A549 (cell line): ENCODE measurements at regions of chr11 and their contacts with region 1.

Region 1: GRCh38 chr11:61733120-61733978 is 19.1 kb upstream of the MYRF start:
- DNase-seq: peak; percentile 81 to 95
- ATAC-seq: peak; percentile 69 to 89
- H3K4me3 ChIP-seq: no peak overlapping the region
- H3K27ac ChIP-seq: 0 out of 6 replicates have a peak overlapping the region, but pooled peaks of 1 of the 2 experiments have one; percentile 41
- H3K4me1 ChIP-seq: peaks cover 27% of the 10 kb centered on the region
- CTCF ChIP-seq: peak; percentile 94
- EP300 ChIP-seq: no peak
- POLR2A ChIP-seq: no peak
- RAD21 ChIP-seq: peak; percentile 93 to 97

Region 2: DNA sequence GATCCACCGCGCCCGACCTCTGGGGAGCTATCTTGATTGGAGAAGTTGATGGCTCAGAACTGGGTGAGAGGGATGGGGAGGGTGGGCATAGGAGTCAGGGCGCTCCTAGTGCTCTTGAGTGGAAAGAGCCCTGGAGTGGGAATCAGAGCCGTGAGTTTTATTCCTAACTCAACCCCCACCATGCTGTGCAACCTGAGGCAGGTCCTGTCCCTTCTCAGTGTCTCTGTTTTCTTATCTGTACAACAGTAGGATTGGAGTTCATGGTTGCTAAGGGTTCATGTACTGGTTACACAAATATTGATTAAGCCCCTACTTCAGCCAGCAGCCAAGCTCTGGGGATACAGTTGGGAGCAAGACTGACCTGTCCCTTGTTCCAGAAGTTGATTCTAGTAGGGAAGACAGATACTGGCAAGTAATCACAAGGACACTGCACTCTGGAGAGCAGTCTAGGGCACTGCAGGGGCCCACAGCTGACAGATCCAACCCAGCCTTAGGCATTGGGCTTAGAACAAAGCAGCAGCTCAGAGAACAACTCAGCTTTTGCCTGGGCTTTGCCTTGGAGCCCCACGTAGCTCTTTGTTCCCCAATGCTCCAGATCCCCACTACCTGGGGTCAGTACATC is 65.6 kb before region 1 on chr11:
- CTCF ChIA-PET with region 1: interaction called, 14 read pairs
- POLR2A ChIA-PET with region 1: no interaction called
- DNase-seq: no peak
- ATAC-seq: peak in 1 of 2 experiments; percentile 62; a peak in 3 of 6 replicates
- H3K4me3 ChIP-seq: no peak overlapping the region
- H3K27ac ChIP-seq: no peak overlapping the region
- H3K4me1 ChIP-seq: peaks cover 8% of the 10 kb centered on the region; the same call in 1 of the 3 replicates
- CTCF ChIP-seq: no peak
- EP300 ChIP-seq: no peak
- POLR2A ChIP-seq: no peak
- RAD21 ChIP-seq: no peak

Region 3: GRCh38 chr11:61688365-61689163 is 44.8 kb before region 1 on chr11:
- CTCF ChIA-PET with region 1: interaction called, 21 read pairs
- POLR2A ChIA-PET with region 1: no interaction called
- DNase-seq: no peak
- ATAC-seq: peak in 1 of 2 experiments; percentile 40; a peak in 3 of 6 replicates
- H3K4me3 ChIP-seq: no peak overlapping the region
- H3K27ac ChIP-seq: peak overlapping the region in 1 of 2 experiments; percentile 65; a peak in 3 of 6 replicates
- H3K4me1 ChIP-seq: peaks cover 10% of the 10 kb centered on the region
- CTCF ChIP-seq: no peak
- EP300 ChIP-seq: no peak
- POLR2A ChIP-seq: no peak
- RAD21 ChIP-seq: no peak

Region 4: DNA sequence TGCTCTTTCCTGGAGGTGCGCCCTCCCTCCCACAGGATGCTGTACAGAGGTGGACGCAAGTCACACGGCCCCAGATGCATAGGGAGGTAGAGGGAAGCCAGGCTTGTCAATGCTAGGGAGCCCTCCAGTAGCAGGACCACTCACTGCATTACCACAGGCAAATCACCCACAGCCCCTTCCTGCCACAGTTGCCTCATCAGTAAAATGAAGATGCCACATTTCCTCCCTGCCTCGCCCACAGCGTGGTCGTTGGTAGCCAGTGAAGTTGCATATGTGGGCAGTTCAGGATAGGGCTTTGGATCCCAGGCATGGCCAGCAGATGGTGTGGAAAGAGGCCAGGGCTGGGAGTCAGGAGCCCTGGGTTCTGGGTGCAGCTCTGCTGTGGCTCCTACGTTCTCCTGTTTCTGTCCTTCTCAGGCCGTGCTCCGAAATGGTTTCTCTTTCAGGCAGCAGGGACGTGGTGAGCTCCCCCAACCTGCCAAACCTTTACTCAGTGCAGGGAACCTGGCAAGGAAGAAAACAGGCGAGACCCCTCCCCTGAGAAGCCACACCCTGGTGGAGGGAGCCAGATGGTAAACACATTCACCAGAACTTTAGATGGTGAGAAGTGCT is 30.5 kb before region 1 on chr11:
- CTCF ChIA-PET with region 1: interaction called, 13 read pairs
- POLR2A ChIA-PET with region 1: interaction called, 3 read pairs
- DNase-seq: no peak
- ATAC-seq: no peak
- H3K4me3 ChIP-seq: no peak overlapping the region
- H3K27ac ChIP-seq: peak overlapping the region in 1 of 2 experiments; percentile 88; a peak in 2 of 6 replicates
- H3K4me1 ChIP-seq: peaks cover 41% of the 10 kb centered on the region
- CTCF ChIP-seq: no peak
- EP300 ChIP-seq: no peak
- POLR2A ChIP-seq: no peak
- RAD21 ChIP-seq: no peak

Region 5: GRCh38 chr11:61718621-61719302 is 14.6 kb before region 1 on chr11:
- CTCF ChIA-PET with region 1: interaction called, 65 read pairs
- POLR2A ChIA-PET with region 1: no interaction called
- DNase-seq: no peak
- ATAC-seq: peak in 1 of 2 experiments; percentile 18; a peak in 2 of 6 replicates
- H3K4me3 ChIP-seq: no peak overlapping the region
- H3K27ac ChIP-seq: peak overlapping the region in 1 of 2 experiments; percentile 60; a peak in 2 of 6 replicates
- H3K4me1 ChIP-seq: peaks cover 21% of the 10 kb centered on the region
- CTCF ChIP-seq: no peak
- EP300 ChIP-seq: no peak
- POLR2A ChIP-seq: no peak
- RAD21 ChIP-seq: no peak

Region 6: GRCh38 chr11:62088331-62088933 is 355.1 kb after region 1 on chr11:
- CTCF ChIA-PET with region 1: no interaction called
- POLR2A ChIA-PET with region 1: no interaction called
- DNase-seq: peak in 1 of 2 experiments; percentile 28
- ATAC-seq: no peak
- H3K4me3 ChIP-seq: no peak overlapping the region
- H3K27ac ChIP-seq: no peak overlapping the region
- H3K4me1 ChIP-seq: no peaks in the 10 kb centered on the region
- CTCF ChIP-seq: no peak
- EP300 ChIP-seq: no peak
- POLR2A ChIP-seq: no peak
- RAD21 ChIP-seq: no peak